Breast epithelium (tissue), 4 donors: ENCODE measurements at regions of chr18 and their contacts with region 1.

Region 1: GRCh38 chr18:13086906-13087305 is 95.7 kb downstream of the CEP192 start:
- DNase-seq: no peak
- H3K4me3 ChIP-seq: no peak overlapping the region
- H3K27ac ChIP-seq: no peak overlapping the region
- H3K4me1 ChIP-seq: no peaks in the 10 kb centered on the region
- H3K27me3 ChIP-seq: no peaks in the 10 kb centered on the region
- CTCF ChIP-seq: no peak
- POLR2A ChIP-seq: no peak

Region 2: GRCh38 chr18:13067124-13067523 is 19.8 kb before region 1 on chr18:
- intact Hi-C with region 1: loop called (anchors 2 kb)
- DNase-seq: no peak
- H3K4me3 ChIP-seq: no peak overlapping the region
- H3K27ac ChIP-seq: no peak overlapping the region
- H3K4me1 ChIP-seq: no peaks in the 10 kb centered on the region
- H3K27me3 ChIP-seq: no peaks in the 10 kb centered on the region
- CTCF ChIP-seq: no peak
- POLR2A ChIP-seq: no peak